ENCODE measurements at regions of chr19 and their contacts with region 1.

Region 1: DNA sequence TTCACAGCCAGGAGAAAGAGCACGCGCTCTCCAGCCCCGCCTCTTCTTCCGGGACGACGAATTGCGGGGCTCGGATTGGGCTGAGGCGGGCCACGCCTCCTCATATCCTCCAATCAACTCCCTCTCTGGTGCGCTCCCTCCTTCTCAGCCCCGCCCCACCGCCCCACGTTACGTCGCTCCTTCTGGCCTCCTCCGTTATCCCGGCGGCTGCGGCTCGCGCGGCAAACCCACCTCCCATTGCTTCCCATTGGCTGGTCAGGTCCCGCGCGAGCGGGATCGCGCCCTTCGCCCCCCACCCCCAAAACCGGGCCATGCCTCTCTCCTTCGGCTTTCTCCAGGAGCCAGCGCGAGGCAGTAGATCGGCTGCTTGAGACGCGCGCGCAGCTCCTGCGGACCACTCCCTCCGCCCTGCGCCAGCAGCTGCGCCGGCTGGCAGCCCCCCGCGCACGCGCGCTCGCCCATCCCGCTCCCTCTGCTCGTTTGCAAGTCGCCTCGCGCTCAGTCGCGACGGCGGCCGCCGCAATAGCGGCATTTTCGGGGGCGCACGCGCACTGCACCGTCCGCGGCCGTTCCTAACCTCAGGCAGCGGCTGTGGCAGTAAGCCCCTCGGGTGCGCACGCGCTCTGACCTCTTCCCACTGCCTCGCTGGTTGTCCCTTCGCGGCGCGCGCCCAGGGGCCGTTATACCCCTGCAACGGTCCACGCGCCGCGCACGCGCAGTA is 512 bp upstream of the ARHGAP35 start:
- DNase-seq: peak; percentile 99
- H3K4me3 ChIP-seq: peak overlapping the region; percentile 76 to 90 (median 87)
- H3K27ac ChIP-seq: peak overlapping the region; percentile 73
- H3K4me1 ChIP-seq: peaks cover 32% of the 10 kb centered on the region
- H3K27me3 ChIP-seq: no peaks in the 10 kb centered on the region
- CTCF ChIP-seq: no peak

Region 2: DNA sequence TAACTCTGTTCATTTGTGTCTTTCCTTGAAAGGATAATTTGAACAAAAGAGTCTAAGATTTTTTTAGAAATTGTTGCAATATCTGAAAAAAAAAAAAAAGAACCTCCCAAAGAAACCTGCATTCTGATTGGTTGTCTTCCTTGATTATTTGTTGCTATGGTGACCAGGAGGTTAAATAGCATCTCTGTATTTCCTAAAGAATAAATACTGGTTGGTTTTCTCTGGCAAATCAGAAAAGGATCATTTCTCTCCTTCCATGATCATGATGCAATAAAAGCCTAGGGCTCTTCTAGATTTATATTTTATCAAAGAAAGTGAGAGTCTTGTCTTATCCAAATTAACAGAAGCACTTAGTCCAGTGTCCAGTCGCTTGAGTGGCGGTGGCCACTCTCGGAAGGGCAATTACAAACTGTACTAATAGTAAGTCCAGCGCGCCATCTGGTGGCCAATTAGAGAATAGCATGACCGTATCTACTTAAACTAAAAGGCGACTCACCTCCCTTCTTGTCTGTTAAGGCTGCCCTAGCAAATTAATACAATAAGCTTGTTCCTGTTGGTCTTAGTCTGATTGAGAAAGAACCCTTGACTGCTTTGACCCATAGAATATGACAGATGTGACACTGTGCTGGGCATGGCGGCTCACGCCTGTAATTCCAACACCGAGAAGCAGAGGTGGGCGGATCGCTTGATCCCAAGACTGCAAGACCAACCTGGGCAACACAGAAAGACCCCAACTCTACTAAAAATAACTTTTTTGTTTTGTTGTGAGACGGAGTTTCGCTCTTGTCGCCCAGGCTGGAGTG is 317.7 kb before region 1 on chr19:
- CTCF ChIA-PET with region 1: no interaction called
- dilution Hi-C with region 1: no loop called
- in situ Hi-C with region 1: no loop called
- intact Hi-C with region 1: no loop called
- DNase-seq: peak; percentile 76
- H3K4me3 ChIP-seq: no peak overlapping the region
- H3K27ac ChIP-seq: no peak overlapping the region
- H3K4me1 ChIP-seq: no peaks in the 10 kb centered on the region
- H3K27me3 ChIP-seq: no peaks in the 10 kb centered on the region
- CTCF ChIP-seq: peak; percentile 72 to 75

Region 3: DNA sequence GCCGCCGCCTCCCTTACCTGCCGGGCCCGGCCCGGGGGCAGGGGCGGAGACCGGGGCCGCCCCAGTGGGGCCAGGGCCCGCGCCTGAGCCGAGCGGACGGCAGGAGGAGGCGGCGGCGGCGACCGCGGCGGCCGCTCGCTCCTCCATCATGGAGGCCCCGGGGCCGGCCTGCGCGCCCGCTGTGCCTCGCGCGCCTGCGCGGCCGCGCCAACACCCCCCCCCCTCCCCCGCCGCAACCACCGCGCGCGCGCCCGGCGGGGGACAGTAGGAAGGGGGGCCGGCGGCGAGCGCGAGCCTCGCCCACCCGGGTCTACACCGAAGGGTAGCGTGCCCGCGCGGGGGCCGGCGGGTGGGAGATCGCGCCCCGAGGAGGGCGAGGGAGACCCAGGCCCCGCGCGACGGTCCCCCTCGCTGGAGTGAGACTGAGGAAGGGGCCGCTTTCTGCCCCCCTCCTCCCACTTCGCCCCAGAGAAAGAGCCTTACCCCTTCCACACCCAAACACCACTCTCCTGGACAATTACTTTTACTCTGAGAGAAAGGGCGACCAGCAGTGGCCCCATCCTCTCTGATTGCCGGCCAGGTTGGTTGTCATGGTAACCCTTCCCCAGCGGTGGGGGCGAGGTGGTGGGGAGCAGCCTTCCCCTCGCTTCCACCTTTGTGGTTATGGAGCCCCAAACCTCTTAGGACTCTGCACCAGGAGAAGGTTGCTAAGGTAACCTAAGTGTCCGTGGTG is 113.8 kb before region 1 on chr19 and contains the start of gene STRN4:
- CTCF ChIA-PET with region 1: no interaction called
- dilution Hi-C with region 1: no loop called
- in situ Hi-C with region 1: no loop called
- intact Hi-C with region 1: no loop called
- DNase-seq: peak; percentile 29
- H3K4me3 ChIP-seq: peak within 1 kb of the TSS; percentile 72 to 85 (median 77)
- H3K27ac ChIP-seq: peak within 1 kb of the TSS; percentile 64
- H3K4me1 ChIP-seq: peaks cover 5% of the 10 kb centered on the region
- H3K27me3 ChIP-seq: no peaks in the 10 kb centered on the region
- CTCF ChIP-seq: no peak
- total RNA-seq, gene STRN4: 59.2 to 92.4 TPM

Region 4: GRCh38 chr19:46878613-46879375 is 18.5 kb after region 1 on chr19:
- CTCF ChIA-PET with region 1: no interaction called
- dilution Hi-C with region 1: no loop called
- in situ Hi-C with region 1: no loop called
- intact Hi-C with region 1: loop called (anchors 2 kb)
- DNase-seq: peak; percentile 64
- H3K4me3 ChIP-seq: no peak overlapping the region
- H3K27ac ChIP-seq: no peak overlapping the region
- H3K4me1 ChIP-seq: peaks cover 36% of the 10 kb centered on the region
- H3K27me3 ChIP-seq: no peaks in the 10 kb centered on the region
- CTCF ChIP-seq: no peak

Region 5: GRCh38 chr19:46902402-46902766 is 42.1 kb after region 1 on chr19:
- CTCF ChIA-PET with region 1: no interaction called
- dilution Hi-C with region 1: no loop called
- in situ Hi-C with region 1: no loop called
- intact Hi-C with region 1: loop called (anchors 2 kb)
- DNase-seq: peak; percentile 90
- H3K4me3 ChIP-seq: peak overlapping the region in 2 of 3 experiments; percentile 16 to 26
- H3K27ac ChIP-seq: peak overlapping the region; percentile 91
- H3K4me1 ChIP-seq: peaks cover 54% of the 10 kb centered on the region
- H3K27me3 ChIP-seq: no peaks in the 10 kb centered on the region
- CTCF ChIP-seq: no peak

Region 6: DNA sequence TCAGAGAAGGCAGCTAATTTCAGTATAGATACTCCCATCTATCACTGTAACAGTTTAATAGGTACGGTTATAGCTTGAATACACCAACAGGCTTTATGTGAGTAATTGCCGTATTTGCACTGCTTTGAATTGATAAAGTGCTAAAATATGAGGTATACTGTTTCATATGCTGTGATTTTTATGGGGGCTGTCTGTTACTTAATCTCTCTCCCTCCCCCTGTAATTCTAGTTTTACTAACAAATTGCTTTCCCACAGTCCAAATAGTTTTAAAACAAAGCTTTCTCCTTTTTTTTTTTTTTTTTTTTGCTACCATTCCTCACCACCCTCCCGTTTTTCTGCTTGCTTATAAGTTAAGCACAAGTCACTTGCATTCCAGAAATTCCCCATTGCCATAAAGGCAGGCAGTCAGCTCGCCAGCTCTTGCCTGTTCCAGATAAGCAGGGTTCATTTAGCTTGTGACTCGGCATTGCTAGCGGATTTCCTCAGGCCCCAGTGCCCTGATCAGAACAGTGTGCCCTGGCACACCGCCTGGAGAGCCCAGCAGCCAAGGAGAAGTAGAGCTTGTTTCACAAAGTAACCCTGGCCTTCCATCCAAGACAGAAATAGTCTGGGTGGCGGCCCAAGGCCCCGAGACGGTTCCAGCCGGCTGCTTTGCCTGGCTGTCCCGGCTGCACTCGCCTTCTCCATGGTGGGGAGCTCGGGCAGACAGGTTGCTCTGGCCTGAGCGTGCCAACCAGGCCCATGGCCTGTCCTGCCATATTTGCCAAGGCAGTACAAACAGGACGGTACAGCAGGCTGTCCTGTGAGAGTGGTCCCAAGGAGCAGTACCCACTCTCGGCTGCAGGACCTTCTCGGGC is 115.9 kb after region 1 on chr19:
- CTCF ChIA-PET with region 1: interaction called, 4 read pairs
- dilution Hi-C with region 1: no loop called
- in situ Hi-C with region 1: loop called in 1 of 2 experiments (anchors 5 kb)
- intact Hi-C with region 1: loop called (anchors 5 kb)
- DNase-seq: peak; percentile 56
- H3K4me3 ChIP-seq: no peak overlapping the region
- H3K27ac ChIP-seq: no peak overlapping the region
- H3K4me1 ChIP-seq: peaks cover 14% of the 10 kb centered on the region
- H3K27me3 ChIP-seq: no peaks in the 10 kb centered on the region
- CTCF ChIP-seq: no peak

Region 7: DNA sequence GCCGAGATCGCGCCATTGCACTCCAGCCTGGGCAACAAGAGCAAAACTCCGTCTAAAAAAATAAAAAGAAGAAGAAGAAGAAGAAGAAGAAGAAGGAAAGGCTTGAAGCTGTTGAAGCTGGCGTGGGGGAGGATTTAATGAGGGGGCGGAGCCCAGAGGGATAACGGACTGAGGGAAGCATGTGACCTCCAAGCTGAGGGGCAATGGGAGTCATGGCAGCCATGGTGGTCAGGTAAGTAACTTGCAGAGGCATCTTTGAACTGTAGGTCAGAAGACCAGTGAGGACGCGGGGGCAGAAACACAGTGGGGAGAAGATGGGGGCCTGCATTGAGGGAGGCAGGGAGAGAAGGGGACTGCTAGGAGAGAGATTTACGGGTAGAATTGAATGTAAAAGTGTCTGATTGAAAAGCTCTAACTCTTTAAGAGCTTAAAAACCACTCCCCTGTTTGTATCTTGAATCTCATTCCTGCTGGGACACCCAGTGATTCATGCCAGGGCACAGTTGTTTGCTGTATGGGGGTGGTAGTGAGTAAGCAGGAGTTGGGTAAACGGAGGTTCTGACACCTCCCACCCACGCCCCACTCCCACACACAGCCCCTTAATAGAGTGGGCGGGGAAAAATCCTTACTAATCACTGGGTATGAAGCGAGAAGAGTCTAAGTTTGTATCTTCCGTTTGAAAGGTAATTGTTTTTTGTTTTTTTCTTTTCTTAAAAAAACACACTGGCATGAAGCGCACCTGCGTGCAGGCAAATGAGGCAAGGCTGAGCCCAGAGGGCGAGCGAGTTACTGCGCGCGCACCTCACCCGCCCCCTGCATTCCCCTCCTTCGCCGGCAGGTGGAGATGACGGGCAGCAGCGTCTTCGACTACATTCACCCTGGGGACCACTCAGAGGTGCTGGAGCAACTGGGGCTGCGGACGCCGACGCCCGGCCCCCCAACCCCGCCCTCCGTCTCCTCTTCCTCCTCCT is 175.1 kb after region 1 on chr19:
- CTCF ChIA-PET with region 1: no interaction called
- dilution Hi-C with region 1: no loop called
- in situ Hi-C with region 1: no loop called
- intact Hi-C with region 1: loop called (anchors 1 kb)
- DNase-seq: peak; percentile 90
- H3K4me3 ChIP-seq: peak overlapping the region; percentile 47 to 79 (median 53)
- H3K27ac ChIP-seq: peak overlapping the region; percentile 68
- H3K4me1 ChIP-seq: peaks cover 14% of the 10 kb centered on the region
- H3K27me3 ChIP-seq: no peaks in the 10 kb centered on the region
- CTCF ChIP-seq: peak; percentile 80 to 94

Region 8: GRCh38 chr19:47112997-47113849 is 252.9 kb after region 1 on chr19 and contains the start of gene ZC3H4:
- CTCF ChIA-PET with region 1: no interaction called
- dilution Hi-C with region 1: no loop called
- in situ Hi-C with region 1: no loop called
- intact Hi-C with region 1: loop called (anchors 5 kb)
- DNase-seq: peak; percentile 99
- H3K4me3 ChIP-seq: peak within 1 kb of the TSS; percentile 77 to 96 (median 81)
- H3K27ac ChIP-seq: peak within 1 kb of the TSS; percentile 99
- H3K4me1 ChIP-seq: peaks cover 20% of the 10 kb centered on the region
- H3K27me3 ChIP-seq: no peaks in the 10 kb centered on the region
- CTCF ChIP-seq: no peak
- total RNA-seq, gene ZC3H4: 13.8 to 57.8 TPM